Aorta (tissue), 5 donors: ENCODE measurements at regions of chr22 and their contacts with region 1.

Region 1: DNA sequence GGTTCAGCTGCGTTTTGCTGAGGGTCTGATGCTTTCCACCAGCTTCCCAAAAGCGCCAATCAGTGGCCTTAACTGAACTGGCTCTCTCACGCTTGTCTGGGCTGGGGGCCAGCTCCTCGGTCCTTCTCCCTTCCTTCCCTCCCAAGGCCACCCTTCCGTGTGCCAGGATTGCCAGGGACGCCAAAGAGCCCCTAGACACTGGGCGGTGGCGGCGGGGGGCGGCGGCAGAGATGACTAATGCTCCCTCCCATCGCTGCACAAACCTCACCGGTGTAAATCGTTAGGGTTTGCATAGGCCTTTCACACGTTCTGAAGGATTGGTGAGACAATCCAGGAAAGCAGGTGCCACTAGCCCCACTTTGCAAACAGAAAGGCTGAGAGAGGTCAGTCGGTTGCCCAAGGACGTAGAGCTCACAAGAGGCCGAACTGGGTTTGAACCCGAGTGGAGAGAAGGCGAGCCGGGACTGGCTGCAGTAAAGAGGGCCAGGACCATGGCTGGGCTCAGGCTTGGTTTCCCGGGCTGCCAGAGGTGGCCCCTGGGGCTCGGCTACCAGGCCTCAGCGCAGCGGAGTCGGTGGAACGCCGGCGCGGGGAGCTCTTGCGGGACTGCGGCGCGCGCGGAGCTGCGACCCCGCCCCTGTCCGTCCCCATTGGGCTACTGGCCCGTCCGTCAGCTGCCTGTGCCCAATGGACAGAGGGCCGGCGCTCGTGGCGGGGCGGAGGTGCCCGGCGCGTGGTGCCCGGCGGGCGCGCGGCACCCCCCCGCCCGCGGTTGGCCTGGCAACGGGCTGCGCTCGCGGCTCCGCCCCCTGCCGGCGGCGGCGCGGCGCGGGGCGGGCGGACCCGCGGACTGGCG is 589 bp upstream of the GNAZ start:
- DNase-seq: peak; percentile 95 to 97
- ATAC-seq: peak; percentile 94
- H3K4me3 ChIP-seq: peak overlapping the region; percentile 27 to 48
- H3K27ac ChIP-seq: no peak overlapping the region
- H3K4me1 ChIP-seq: no peaks in the 10 kb centered on the region
- H3K27me3 ChIP-seq: no peaks in the 10 kb centered on the region

Region 2: GRCh38 chr22:23113067-23113846 is 43.5 kb after region 1 on chr22:
- intact Hi-C with region 1: no loop called
- DNase-seq: no peak
- ATAC-seq: no peak
- H3K4me3 ChIP-seq: no peak overlapping the region
- H3K27ac ChIP-seq: no peak overlapping the region
- H3K4me1 ChIP-seq: no peaks in the 10 kb centered on the region
- H3K27me3 ChIP-seq: no peaks in the 10 kb centered on the region

Region 3: DNA sequence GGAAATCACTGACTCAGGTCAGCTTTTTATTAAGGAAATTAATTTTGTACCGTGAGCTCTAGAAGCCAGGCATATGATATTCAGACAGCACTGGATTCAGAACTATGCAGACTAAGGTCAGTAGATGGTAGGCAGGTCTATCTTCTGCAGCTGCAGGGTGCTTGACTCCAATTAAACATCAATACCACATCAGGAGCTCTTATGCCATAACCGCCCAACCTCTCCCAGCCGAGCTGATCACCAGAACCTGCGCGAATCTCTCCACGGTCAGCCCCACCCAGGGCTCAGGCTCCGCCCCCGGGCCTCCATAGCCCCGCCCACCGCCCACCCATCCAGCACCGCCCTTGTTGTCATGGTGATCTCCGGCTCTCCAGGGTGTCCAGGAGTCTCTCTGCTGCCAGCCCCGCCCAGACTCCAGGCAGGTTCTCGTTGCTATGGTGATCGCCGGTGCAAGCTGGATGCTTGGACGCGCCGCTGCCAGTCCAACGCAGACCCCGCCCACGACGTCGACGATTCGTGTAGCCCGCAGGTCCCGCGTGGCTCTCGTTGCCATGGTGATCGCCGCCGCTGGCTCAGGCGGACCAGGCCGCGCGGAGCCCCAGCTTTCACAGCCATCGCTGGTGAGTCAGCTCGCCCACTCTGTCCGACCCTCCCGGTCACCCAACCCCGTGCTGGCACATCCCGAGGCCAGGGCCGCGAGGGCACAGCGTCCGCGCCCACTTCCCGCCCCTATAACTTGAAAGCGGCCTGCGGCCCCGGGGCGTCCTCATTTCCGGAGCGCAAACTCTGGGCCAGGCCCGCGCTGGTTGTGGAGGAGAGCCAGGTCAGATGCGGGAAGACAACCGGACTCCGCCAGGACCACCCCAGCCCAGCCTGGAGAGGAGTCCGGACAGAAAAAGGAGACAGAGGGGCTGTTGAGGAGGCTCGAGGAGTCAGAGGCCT is 75.5 kb after region 1 on chr22 and contains the start of gene RAB36:
- intact Hi-C with region 1: loop called in 1 of 2 experiments (anchors 5 kb)
- DNase-seq: peak; percentile 99 to 100
- ATAC-seq: peak; percentile 92
- H3K4me3 ChIP-seq: no peak within 1 kb of the TSS
- H3K27ac ChIP-seq: peak within 1 kb of the TSS in 1 of 2 donors; percentile 48
- H3K4me1 ChIP-seq: no peaks in the 10 kb centered on the region
- H3K27me3 ChIP-seq: no peaks in the 10 kb centered on the region
- total RNA-seq, gene RAB36: 1.8 to 3.2 TPM